ENCODE measurements at regions of chr15 and their contacts with region 1.

Region 1: DNA sequence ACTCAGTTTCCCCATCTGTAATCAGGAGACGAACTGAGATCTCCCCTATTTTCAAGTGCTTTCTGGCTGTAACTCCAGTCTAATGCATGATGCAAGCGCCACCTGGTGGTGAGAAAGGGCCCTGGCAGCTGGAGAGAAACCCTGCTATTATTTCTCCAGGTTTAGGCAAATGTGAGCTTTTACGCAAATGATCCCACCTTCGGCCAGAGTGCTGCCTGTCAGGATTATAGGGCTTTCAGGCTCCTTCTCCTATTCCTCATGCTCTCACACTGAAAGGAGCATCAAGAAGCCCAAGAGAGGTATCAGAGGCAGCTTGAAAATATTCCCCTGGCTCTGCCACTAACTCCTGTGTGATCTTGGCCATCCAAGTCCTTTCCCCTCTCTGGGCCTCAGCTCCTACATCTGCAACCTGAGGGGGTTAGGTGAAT is 93.9 kb upstream of the RASGRF1 start:
- H3K4me3 ChIP-seq: no peak overlapping the region
- H3K27ac ChIP-seq: no peak overlapping the region
- H3K4me1 ChIP-seq: peaks cover 3% of the 10 kb centered on the region
- CTCF ChIP-seq: peak; percentile 79

Region 2: DNA sequence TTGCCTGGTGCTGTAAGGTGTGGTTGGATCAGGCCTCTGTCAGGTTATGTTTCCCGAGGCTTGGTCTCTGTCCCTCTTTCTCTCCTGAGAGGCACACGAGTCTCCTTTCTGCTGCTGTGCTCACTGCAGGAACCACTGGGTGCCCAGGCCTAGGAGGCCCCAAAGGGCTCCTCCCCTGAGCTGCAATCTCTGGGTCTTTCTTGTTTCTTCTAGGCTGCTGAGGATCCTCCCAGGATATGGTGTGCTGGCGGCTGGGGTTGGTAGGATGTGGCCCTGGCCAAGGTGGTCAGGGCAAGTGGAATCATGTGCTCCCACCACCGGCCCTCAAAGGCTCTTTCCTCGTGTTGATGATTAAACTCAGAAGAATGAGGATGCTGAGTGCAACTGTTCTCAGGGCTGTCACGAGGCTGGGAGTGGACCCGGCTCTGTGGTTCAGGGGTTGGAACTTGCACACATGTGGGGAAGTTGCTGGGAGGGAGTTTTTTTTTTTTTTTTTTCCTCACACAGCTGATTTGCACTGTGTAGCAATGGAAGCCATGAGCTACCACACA is 196.0 kb before region 1 on chr15:
- CTCF ChIA-PET with region 1: interaction called, 13 read pairs
- POLR2A ChIA-PET with region 1: no interaction called
- H3K4me3 ChIP-seq: no peak overlapping the region
- H3K27ac ChIP-seq: no peak overlapping the region
- H3K4me1 ChIP-seq: no peaks in the 10 kb centered on the region
- CTCF ChIP-seq: no peak

Region 3: GRCh38 chr15:79089890-79090486 is 94.5 kb before region 1 on chr15:
- CTCF ChIA-PET with region 1: interaction called, 20 read pairs
- POLR2A ChIA-PET with region 1: no interaction called
- H3K4me3 ChIP-seq: peak overlapping the region; percentile 28
- H3K27ac ChIP-seq: no peak overlapping the region
- H3K4me1 ChIP-seq: peaks cover 6% of the 10 kb centered on the region; the same call in 1 of the 2 replicates
- CTCF ChIP-seq: no peak

Region 4: GRCh38 chr15:79136434-79137046 is 47.9 kb before region 1 on chr15:
- CTCF ChIA-PET with region 1: interaction called, 27 read pairs
- POLR2A ChIA-PET with region 1: no interaction called
- H3K4me3 ChIP-seq: no peak overlapping the region
- H3K27ac ChIP-seq: no peak overlapping the region
- H3K4me1 ChIP-seq: 0 out of 2 replicates have a peak, but pooled peaks cover 3% of the 10 kb centered on the region
- CTCF ChIP-seq: no peak

Region 5: DNA sequence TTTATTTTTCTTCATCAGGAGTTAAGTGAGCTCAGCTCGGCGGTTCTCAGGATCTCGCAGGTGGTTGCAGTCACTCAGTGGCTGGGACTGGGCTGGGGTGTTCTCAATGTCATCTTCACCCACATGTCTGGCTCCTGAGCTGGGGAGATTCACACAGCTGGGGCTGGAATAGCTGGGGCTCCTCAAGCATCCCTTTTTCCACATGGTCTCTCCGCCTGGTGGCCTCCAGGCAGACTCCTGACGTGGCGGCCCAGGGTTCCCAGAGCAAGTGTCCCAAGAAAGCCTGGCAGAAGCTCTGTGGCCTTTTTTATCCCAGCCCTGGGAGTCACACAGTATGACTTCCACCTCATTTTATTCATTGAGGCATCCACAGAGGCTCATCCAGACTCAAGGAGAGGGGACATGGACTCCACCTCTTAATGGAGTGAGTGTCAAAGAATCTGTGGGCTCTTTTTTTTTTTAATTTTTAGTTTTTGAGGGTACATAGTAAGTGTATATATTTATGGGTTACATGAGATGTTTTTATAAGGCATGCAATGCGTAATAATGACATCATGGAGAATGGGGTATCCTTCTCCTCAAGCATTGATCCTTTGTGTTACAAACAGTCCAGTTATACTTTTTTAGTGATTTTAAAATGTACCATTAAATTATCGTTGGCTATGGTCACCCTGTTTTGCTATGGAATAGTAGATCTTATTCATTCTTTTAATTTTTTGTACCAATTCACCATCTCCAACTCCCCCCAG is 14.2 kb after region 1 on chr15:
- CTCF ChIA-PET with region 1: interaction called, 53 read pairs
- POLR2A ChIA-PET with region 1: interaction called, 3 read pairs
- H3K4me3 ChIP-seq: no peak overlapping the region
- H3K27ac ChIP-seq: no peak overlapping the region
- H3K4me1 ChIP-seq: no peaks in the 10 kb centered on the region
- CTCF ChIP-seq: no peak

Region 6: GRCh38 chr15:79370716-79371115 is 186.2 kb after region 1 on chr15:
- CTCF ChIA-PET with region 1: no interaction called
- POLR2A ChIA-PET with region 1: no interaction called
- H3K4me3 ChIP-seq: no peak overlapping the region
- H3K27ac ChIP-seq: no peak overlapping the region
- H3K4me1 ChIP-seq: no peaks in the 10 kb centered on the region
- CTCF ChIP-seq: no peak

Region 7: GRCh38 chr15:79418693-79419279 is 234.3 kb after region 1 on chr15:
- CTCF ChIA-PET with region 1: no interaction called
- POLR2A ChIA-PET with region 1: no interaction called
- H3K4me3 ChIP-seq: no peak overlapping the region
- H3K27ac ChIP-seq: no peak overlapping the region
- H3K4me1 ChIP-seq: no peaks in the 10 kb centered on the region
- CTCF ChIP-seq: no peak

Measured in HEK293 (cell line).